Activated naive CD4-positive, alpha-beta T cell treated with anti-CD3 and anti-CD28 coated beads, Interleukin-2, amount 10 ng/mL, durations not matched to agents 7 days and 5 days (primary cell): ENCODE measurements at regions of chr18 and their contacts with region 1.

Region 1: DNA sequence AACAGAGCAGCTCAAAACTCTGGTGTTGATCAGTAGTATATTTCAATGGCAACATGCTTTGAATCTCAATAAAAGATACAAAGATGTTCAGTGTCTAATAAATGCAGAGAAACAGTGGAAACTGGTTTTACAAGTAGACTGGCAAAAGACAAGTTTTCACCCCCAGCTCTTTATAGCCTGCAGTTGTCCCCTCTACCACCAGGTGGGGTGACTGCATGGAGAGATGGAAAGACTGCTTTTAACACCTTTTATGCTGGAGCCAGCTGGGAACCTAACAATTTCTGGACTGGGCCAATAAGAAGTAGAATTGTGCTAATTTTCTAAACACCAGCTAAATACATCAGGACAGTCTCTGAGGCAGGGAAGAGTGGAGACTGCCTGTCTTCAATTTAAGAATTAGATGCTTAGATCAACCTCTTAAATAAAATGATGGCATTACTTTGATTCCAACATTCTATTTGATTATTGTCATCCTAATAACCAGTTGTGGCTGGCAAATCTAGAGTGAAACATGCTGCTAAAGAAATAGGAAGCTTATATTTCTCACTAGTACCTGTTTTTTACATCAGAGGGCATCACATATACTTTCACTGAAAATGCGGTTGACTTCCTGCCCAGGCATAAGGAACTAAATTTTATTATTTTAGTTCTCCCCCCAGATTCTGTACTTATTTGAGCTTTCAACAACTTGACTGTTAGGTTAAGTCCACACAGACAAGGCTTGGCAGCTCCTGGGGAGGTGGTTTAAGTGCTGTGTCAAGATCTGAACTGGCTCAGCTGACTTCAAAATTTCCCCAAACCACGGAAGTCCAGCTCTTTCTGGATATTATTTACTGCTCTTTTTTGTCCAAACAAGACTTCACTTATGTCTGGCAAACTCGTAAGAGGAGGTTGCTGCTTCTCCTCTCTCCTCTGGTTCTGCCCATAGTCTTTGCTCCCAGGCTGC is 140.5 kb downstream of the TPGS2 start:
- DNase-seq: peak; percentile 69
- H3K4me3 Mint-ChIP-seq: no peak overlapping the region
- H3K27ac Mint-ChIP-seq: no peak overlapping the region
- H3K4me1 Mint-ChIP-seq: no peaks in the 10 kb centered on the region
- H3K27me3 Mint-ChIP-seq: peaks cover 8% of the 10 kb centered on the region

Region 2: DNA sequence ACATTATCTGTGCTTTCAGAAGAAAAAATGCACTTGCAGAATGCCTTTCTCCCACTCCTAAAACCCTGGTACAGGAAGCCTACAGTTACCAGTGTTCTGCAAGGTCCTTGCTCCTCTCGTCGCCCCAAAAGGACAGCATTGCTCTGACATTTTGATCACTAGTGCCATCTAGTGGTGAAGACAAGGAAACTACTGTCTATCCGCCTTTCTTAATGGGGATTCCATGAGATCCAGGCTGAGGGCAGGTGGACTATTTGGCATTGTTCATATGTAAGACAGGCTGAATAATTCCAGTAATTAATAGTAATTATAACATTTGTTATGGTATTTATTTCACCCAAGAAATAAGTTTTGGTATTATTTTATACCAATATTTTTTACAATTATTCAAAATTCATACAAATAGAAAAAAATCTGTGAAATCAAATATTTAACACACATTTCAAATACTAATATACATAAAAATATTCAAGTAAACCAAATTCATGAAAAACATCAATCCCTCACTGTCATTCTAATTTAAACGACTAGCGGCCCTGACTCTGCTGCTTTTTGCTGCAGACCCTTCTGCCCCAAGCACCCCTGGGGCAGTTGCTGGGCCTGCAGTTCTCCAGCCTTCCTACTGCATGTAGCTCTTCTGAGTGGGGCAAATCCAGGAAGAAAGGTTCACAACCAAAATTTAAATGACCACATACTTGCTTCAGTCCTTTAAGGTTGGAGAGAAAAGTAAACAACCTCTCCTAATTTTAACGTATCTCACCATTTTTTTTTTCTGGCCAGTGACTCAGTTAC is 121.5 kb after region 1 on chr18:
- CTCF ChIA-PET with region 1: interaction called, 38 read pairs
- DNase-seq: peak; percentile 39
- H3K4me3 Mint-ChIP-seq: no peak overlapping the region
- H3K27ac Mint-ChIP-seq: no peak overlapping the region
- H3K4me1 Mint-ChIP-seq: peaks cover 2% of the 10 kb centered on the region
- H3K27me3 Mint-ChIP-seq: no peaks in the 10 kb centered on the region

Region 3: DNA sequence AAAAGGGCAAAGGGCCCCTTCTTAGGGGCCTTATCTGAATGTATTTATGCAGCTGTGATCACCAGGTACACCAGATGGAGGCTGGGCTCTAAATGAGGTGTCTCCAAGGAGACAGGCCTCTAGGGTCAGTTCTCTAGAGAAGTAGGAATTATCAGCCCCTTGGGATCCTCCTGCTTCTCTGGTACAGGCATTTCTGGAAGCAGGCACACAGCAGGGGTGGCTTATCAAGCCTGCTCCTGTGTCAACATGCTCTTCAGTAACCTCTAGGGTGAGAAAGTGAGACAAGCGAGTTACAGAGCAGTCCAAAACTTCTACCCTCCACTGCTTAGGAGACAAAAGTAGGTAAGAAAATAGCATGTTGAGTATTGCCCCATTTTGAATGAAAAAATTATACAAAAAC is 126.7 kb after region 1 on chr18:
- CTCF ChIA-PET with region 1: interaction called, 38 read pairs
- DNase-seq: no peak
- H3K4me3 Mint-ChIP-seq: no peak overlapping the region
- H3K27ac Mint-ChIP-seq: no peak overlapping the region
- H3K4me1 Mint-ChIP-seq: no peaks in the 10 kb centered on the region
- H3K27me3 Mint-ChIP-seq: no peaks in the 10 kb centered on the region